Posterior vena cava (tissue), 2 donors: ENCODE measurements at regions of chr2 and their contacts with region 1.

Region 1: DNA sequence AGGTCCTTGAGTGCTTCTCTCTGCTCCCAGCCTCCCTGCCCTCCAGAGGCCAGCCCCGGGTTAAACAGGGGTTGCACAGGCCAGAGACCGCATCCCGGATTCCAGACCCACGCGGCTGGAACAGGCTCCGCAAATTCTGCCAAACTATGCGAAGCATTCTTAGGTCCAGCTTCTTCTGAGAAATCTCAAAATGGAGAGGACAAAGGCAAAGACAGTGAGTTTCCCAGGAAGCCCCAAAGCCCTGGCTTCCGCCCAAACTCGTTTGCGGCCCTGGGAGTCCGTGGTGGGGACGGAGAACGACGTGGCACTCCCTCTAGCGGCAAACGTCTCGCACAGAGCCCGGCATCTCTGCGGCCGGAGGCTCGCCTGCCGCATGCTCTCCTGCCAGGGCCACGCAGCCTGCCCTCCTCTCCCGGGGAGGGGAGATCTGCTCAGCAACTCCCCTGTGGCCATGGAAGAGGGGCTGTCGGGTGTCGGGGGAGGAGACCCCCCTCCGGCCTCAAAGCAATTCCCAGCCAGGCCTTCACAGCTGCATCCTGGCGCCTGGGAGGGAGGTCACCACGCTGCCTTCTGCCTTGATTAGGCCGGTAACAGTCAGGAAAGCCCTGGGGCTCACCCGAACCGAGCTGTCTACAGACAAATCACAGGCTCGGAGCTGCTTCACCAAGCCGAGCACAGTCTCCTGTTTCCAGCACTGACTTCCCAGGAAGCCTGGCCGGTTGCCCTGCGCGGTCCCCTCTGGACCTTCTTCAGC is 33.4 kb upstream of the KLHL29 start:
- DNase-seq: peak; percentile 96

Region 2: DNA sequence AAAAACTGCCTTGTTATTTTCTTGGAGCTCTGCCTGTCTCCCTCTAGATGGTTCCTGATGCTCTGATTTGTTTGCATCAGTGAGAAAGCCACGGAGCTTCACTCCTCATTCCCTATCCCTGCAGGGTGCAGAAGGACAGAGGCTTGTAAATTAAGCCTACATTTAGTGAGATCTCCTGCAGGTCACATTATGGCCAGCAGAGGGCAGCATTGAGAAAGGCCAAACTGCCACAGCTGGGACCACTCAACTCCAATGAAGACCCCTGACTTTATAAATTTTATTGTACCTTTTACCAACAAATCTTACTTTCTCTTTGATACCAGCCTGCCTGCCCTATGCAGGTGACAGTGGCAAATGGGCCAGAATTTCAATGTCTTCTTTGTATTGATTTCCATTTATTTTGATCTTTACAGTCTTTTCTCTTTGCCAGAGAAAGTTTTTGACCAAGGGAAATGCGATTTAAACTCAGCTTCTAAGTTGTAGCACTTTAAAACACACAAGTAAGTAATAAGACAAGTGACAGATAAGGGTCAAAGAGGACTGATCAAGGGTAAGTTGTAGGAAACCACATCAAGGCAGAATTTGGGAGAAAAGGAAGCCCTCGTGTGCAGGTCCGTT is 995.6 kb before region 1 on chr2:
- intact Hi-C with region 1: loop called in 1 of 2 experiments (anchors 5 kb)
- DNase-seq: no peak

Region 3: GRCh38 chr2:23414871-23415270 is 63.3 kb after region 1 on chr2:
- intact Hi-C with region 1: no loop called
- DNase-seq: no peak